Lower leg skin (tissue), 4 donors: ENCODE measurements at regions of chr5 and their contacts with region 1.

Region 1: DNA sequence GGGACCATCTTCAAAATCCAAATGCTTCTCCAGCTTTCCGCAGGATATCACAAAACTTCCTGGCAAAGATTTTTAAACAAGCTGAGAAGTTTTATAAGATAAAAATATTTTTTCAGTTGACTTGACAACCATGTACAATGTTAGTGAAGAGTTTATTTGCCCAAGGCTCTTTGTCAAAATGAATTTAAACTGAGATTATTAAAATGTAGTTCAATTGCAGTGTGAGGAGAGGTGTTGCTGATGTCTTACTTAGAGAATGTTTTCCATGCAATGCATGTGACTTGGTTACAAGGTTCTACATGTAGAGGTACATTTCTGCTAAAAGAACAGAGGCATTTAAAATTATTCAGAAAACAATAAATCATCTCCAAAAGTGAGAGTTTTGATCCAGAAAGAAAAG is 131.4 kb upstream of the MINAR2 start:
- DNase-seq: no peak
- H3K4me3 ChIP-seq: no peak overlapping the region
- CTCF ChIP-seq: no peak
- POLR2A ChIP-seq: no peak

Region 2: DNA sequence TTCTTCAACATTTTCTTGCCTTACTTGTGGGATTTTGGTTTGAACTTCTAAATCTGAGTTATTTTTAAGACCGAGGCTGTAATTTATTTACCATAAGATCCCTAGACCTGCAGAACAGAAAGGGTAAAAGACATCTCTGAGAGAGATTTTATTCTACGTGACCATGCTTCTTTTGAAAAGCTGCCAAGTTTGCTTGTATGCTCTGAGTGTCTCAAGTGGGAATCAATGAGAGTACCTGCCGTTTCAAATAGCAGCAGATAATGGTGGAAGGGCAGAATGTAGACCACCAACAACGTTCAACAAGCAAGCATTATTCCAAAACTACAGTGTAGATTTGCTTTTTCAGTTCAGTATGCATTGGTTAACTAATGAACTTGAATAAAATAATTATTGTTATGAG is 22.8 kb after region 1 on chr5:
- intact Hi-C with region 1: loop called (anchors 1 kb)
- DNase-seq: no peak
- H3K4me3 ChIP-seq: no peak overlapping the region
- CTCF ChIP-seq: no peak
- POLR2A ChIP-seq: no peak

Region 3: DNA sequence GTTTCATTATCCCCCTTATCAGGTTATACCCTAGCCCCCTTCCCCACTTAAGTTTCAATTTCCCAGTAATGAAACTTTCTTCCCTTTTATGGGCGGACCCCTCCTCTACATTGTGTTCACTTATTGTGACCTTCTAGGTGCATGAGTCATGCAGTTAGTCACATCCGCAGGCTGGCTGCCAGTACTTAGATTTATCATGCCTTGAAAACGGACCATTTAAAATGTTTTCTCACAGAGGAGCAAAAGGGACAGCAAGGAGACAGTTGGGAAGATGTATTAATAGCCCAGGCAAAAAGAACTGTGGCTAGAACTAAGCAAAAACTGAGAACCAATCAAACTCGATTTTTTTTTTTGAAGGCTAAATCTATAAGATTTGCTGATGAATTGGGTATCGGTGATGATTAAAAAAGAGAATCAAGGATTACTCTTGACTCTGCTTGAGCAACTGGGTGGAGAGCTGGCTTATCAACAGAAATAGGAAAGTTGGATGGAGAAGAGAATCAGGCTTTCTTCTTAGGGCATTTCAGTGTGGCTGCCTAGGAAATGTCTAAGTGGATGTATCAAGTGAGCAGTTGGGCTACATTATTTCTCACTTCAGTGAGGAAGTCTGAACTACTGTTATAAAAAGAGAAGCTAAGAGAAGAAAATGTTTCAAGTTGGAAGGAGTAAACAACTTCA is 933.5 kb after region 1 on chr5:
- intact Hi-C with region 1: no loop called
- DNase-seq: no peak
- H3K4me3 ChIP-seq: no peak overlapping the region
- CTCF ChIP-seq: no peak
- POLR2A ChIP-seq: no peak